Posterior vena cava (tissue), 2 donors: ENCODE measurements at regions of chr2 and their contacts with region 1.

Region 1: GRCh38 chr2:149017116-149017985 is 21.1 kb upstream of the LYPD6B start:
- DNase-seq: peak; percentile 89

Region 2: GRCh38 chr2:149561309-149561926 is 544.1 kb after region 1 on chr2:
- intact Hi-C with region 1: loop called (anchors 5 to 10 kb)
- DNase-seq: no peak